GM12878 (cell line): ENCODE measurements at regions of chr5 and their contacts with region 1.

Region 1: DNA sequence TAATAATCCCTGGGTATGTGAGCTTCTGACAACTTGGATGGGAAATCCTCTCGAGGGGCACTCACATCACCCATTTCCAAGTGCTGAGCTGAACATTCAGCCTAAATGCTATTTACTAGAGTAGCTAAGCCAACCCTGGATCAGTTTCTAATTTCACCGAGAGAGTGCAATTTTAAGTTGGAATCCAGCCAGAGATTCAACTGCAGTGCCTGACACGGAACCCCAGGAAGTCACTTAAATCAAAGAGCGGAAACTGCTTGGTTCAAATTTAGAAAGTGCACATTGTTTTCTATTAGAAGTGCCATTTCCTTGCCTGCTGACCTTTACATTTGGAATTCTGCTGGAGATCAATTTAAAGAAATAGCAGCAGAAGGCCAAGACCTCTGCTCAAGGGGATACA is 8.8 kb downstream of the SPRY4 start:
- DNase-seq: no peak
- ATAC-seq: no peak
- H3K4me3 ChIP-seq: 0 out of 2 replicates have a peak overlapping the region, but pooled peaks have one; percentile 26
- H3K27ac ChIP-seq: peak overlapping the region; percentile 52; the same call in 1 of the 2 replicates
- H3K4me1 ChIP-seq: peaks cover 19% of the 10 kb centered on the region
- H3K27me3 ChIP-seq: no peaks in the 10 kb centered on the region
- CTCF ChIP-seq: no peak
- EP300 ChIP-seq: no peak
- POLR2A ChIP-seq: no peak
- RAD21 ChIP-seq: no peak

Region 2: GRCh38 chr5:142087920-142088679 is 228.0 kb before region 1 on chr5:
- CTCF ChIA-PET with region 1: no interaction called
- POLR2A ChIA-PET with region 1: no interaction called
- RAD21 ChIA-PET with region 1: no interaction called
- SMC1A ChIA-PET with region 1: no interaction called
- in situ Hi-C with region 1: no loop called
- intact Hi-C with region 1: no loop called
- DNase-seq: no peak
- ATAC-seq: peak; percentile 27; the same call in 1 of the 3 replicates
- H3K4me3 ChIP-seq: no peak overlapping the region
- H3K27ac ChIP-seq: no peak overlapping the region
- H3K4me1 ChIP-seq: 0 out of 2 replicates have a peak, but pooled peaks cover 7% of the 10 kb centered on the region
- H3K27me3 ChIP-seq: no peaks in the 10 kb centered on the region; a peak in 2 of 4 replicates
- CTCF ChIP-seq: no peak
- EP300 ChIP-seq: no peak
- POLR2A ChIP-seq: no peak
- RAD21 ChIP-seq: no peak

Region 3: GRCh38 chr5:142548739-142549275 is 232.8 kb after region 1 on chr5:
- CTCF ChIA-PET with region 1: interaction called, 4 read pairs
- POLR2A ChIA-PET with region 1: no interaction called
- RAD21 ChIA-PET with region 1: no interaction called
- SMC1A ChIA-PET with region 1: interaction called, 3 read pairs
- in situ Hi-C with region 1: no loop called
- intact Hi-C with region 1: loop called (anchors 5 kb)
- DNase-seq: peak; percentile 12
- ATAC-seq: peak; percentile 78
- H3K4me3 ChIP-seq: no peak overlapping the region
- H3K27ac ChIP-seq: no peak overlapping the region
- H3K4me1 ChIP-seq: no peaks in the 10 kb centered on the region
- H3K27me3 ChIP-seq: peaks cover 0 to 6% of the 10 kb centered on the region in 2 experiments; a peak in 2 of 4 replicates
- CTCF ChIP-seq: peak; percentile 46 to 53 (median 50); a peak in 5 of 6 replicates
- EP300 ChIP-seq: no peak
- POLR2A ChIP-seq: no peak
- RAD21 ChIP-seq: peak; percentile 31